Activated T-helper 1 cell treated with anti-CD3 and anti-CD28 coated beads, Interleukin-12 subunit alpha, Interleukin-12 subunit beta, Interleukin-2, Interleukin-4 antibody, amounts not matched to agents 30 ng/mL and 10 ng/mL and 1 ng/mL, durations not matched to agents 14 hours and 24 hours and 36 hours (primary cell): ENCODE measurements at regions of chr12 and their contacts with region 1.

Region 1: DNA sequence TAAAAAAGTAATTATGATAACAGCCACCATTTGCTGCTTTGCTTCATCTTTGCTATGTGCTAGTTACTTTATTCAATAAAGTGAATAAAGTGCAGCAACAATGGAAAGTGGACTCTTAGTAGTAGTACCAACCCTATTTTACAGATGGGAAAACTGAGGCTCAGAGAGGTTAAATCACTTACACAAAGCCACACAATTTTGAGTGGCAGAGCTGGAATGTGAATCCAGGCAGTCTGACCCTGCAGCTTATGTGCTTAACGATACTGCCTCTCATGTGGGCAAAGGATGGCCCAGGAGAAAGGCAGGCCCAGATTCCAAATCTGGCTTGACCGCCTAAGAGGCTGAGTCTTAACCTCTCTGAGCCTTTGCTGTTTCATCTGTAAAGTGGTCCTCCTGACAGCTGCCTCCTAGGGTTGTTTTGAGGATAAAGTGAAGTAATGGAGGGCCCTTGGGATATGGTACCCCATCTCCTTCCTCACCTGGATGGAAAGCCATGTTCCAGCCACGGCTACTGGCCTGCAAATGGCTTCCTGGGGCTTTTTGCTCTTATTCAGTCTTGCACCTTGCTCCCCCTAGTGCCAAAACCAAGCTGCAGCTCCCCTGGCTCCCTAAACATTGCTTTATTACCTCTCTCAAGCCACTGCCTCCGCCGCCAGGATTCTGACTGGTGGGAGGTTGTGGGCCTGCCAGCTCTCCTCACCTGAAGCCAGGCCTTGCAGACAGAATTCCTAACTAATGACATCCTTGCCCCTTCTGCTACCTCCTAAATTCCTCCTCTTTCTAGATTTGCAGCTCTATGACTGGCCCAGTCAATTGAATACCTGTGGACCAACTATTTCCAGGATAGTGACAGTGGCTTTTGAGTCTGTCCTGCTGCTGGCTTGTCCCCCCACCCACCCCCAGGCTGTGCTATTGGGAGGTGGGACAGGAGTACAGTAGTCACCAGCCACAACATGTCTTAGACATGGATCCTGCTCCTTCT is 283.3 kb upstream of the PWP1 start:
- DNase-seq: peak; percentile 52
- H3K4me3 Mint-ChIP-seq: no peak overlapping the region
- H3K27ac Mint-ChIP-seq: no peak overlapping the region
- H3K4me1 Mint-ChIP-seq: peaks cover 41% of the 10 kb centered on the region
- H3K27me3 Mint-ChIP-seq: no peaks in the 10 kb centered on the region

Region 2: DNA sequence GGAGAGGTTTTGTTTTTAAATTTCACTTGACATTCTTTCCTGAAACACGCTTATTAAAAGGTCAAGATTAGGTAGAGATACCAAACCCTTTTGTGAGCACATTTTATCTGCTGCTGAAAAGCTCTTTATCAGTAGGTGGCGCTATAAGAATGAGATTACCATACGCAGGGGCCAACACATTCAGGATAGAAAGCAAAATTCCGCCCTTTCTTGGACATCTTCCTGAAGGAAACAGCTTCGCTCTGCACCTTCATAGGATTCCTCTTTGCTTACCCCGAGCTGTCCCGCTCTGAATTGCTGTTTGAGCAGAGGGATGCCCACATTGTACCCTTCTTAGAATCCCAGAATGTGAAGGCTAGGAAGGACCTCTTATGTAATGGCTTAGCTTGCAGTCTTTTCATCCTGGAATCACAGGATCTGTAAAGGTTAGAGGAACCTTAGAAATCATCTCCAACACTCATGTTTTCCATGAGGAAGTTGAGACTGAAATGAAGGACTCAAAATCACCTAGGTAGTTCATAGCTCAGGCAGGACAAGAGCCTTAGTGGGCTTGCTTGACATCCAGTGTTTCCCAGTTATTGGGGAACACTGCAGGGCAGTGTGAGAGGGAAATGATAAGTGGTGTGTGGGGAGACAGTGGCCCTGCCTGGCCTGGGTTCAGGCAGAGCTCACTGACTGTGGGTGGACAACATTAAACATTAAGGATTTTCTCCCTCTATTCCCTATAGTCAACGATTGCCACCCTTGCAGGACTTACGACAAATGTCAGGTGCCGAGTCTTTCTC is 270.3 kb before region 1 on chr12:
- intact Hi-C with region 1: loop called (anchors 1 kb)
- DNase-seq: peak; percentile 6
- H3K4me3 Mint-ChIP-seq: no peak overlapping the region
- H3K27ac Mint-ChIP-seq: no peak overlapping the region
- H3K4me1 Mint-ChIP-seq: no peaks in the 10 kb centered on the region
- H3K27me3 Mint-ChIP-seq: no peaks in the 10 kb centered on the region

Region 3: DNA sequence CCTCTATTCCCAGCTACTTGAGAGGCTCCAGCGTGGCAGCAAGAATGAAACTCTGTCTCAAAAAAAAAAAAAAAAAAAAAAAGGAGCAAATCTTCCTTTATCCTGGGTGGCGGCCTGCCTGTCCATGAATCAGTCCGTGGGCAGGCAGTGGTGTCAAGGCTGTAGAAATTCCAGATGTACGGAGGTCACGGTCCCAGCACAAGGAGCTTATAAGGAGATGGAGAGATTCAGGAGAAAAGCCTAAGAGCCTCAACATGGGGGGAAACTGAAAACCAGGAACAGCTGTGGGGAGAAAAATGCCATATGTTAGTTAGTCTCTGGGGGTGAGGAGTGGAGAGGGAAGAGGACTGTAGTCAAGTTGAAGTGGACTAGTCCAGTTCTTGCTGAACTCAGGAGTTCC is 178.5 kb before region 1 on chr12:
- intact Hi-C with region 1: loop called (anchors 5 kb)
- DNase-seq: no peak
- H3K4me3 Mint-ChIP-seq: no peak overlapping the region
- H3K27ac Mint-ChIP-seq: no peak overlapping the region
- H3K4me1 Mint-ChIP-seq: no peaks in the 10 kb centered on the region
- H3K27me3 Mint-ChIP-seq: peaks cover 27% of the 10 kb centered on the region

Region 4: GRCh38 chr12:107304588-107305532 is 97.5 kb before region 1 on chr12:
- intact Hi-C with region 1: no loop called
- DNase-seq: no peak
- H3K4me3 Mint-ChIP-seq: no peak overlapping the region
- H3K27ac Mint-ChIP-seq: no peak overlapping the region
- H3K4me1 Mint-ChIP-seq: peaks cover 15% of the 10 kb centered on the region
- H3K27me3 Mint-ChIP-seq: peaks cover 9% of the 10 kb centered on the region

Region 5: DNA sequence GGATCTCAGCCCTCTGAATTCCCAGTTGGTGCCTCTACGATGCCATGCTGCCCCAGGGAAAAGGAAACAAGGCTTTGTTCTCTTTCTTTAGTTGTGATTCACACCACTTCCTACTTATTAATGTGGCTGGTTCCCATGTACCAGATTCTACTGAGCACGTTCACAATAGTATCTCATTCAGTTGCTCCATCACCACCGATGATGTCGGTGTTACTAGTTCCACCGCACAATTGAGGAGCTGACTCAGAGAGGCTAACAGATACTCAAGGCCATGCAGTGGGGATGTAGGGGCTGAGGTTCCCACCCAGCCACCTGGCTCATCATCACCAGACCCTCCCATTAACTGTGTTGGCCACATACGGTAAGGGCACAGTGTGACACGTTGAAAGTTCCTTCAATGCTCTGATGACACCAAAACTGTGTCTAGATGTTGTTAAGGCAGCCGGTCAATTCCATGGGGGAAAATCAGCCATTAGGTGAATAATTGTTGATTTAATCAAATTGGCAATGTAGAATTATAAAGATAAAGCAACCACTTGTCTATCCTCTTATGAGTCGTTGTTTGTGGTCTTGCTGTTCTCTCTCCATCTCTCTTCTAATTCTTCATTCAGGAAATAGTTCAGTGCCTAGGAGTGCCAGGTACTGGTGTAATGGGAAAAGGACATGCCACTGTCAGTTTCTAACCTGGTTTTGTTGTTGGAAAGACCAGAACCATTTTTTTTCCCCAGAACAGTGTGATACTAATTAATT is 64.8 kb before region 1 on chr12:
- intact Hi-C with region 1: no loop called
- DNase-seq: no peak
- H3K4me3 Mint-ChIP-seq: no peak overlapping the region
- H3K27ac Mint-ChIP-seq: peak overlapping the region; percentile 22
- H3K4me1 Mint-ChIP-seq: peaks cover 55% of the 10 kb centered on the region
- H3K27me3 Mint-ChIP-seq: no peaks in the 10 kb centered on the region

Region 6: DNA sequence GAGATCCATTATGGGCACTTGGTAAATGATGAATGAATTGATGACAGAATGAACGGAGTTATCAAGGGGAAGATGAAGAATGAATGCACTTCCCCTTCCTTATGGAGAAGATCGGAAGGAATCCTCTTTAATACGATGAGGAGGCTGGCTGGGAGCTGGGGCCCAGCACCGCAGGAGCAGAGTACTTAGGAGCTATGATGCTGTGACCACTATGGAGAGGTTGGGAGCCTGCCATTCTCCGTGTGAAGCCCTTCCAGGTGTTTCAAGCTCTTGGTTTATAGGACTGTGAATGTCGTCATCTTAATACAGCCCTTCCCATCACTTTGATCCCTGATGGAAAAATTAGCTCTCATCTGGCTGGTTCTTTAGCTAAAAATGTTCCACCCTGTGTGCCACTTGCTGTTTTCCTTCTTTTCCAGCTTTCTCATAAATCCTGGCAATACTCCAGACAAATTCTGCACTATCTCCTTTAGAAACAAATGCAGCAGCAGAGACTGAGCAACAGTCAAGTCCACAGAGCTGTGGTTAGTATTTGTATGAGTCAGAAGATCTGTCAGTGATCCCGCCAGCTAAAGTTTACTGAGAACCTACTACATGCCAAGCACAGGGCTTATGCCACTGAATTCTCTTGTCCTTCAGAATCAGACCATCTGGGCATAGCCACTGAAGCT is 45.9 kb before region 1 on chr12:
- intact Hi-C with region 1: loop called (anchors 1 kb)
- DNase-seq: no peak
- H3K4me3 Mint-ChIP-seq: peak overlapping the region; percentile 19
- H3K27ac Mint-ChIP-seq: no peak overlapping the region
- H3K4me1 Mint-ChIP-seq: peaks cover 74% of the 10 kb centered on the region
- H3K27me3 Mint-ChIP-seq: peaks cover 2% of the 10 kb centered on the region

Region 7: DNA sequence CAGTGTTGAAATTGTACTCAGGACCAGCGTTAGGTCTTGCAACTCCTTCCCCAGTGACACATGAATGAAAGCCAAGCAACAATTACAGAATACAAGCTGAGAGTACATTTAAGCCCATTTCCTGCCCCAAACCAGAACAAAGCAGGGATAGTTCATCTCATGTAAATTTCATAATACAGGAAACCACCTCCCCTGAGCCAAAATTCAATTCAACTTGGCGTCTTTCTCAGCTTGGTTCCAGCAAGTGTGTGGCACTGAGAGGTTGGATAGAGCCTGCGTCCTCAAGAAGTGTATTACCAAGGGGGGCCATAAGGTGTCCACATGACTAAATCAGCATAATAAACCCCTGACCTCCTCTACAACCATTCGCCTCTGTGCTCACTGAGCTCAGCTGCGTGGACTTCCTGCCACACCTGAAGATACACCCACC is 30.1 kb before region 1 on chr12:
- intact Hi-C with region 1: loop called (anchors 1 kb)
- DNase-seq: peak; percentile 42
- H3K4me3 Mint-ChIP-seq: peak overlapping the region; percentile 52
- H3K27ac Mint-ChIP-seq: peak overlapping the region; percentile 87
- H3K4me1 Mint-ChIP-seq: peaks cover 75% of the 10 kb centered on the region
- H3K27me3 Mint-ChIP-seq: no peaks in the 10 kb centered on the region

Region 8: DNA sequence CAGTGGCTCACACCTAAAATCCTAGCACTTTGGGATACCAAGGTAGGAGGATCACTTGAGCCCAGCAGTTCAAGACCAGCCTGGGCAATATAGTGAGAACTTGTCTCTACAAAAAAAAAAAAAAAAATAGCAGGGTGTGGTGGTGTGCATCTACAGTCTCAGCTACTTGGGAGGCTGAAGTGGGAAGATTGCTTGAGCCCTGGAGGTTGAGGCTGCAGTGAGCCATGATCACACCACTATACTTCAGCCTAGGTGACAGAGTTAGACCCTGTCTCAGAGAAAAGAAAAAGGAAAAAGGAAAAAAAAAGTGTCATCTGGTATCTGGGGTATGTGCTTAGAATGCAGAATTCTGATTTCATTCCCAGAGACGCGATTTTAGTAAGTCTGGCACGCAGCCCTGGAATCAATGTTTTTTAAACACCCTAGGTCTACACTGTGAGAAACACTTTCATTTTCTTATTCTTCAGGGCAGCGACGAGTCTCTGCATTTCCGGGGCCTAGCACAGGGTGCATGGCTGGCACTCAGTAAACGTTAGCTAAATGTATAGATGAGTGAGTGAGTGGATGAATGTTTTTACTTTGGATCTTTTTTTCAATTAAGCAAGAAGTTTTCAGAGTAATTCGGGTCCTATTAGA is 39.5 kb after region 1 on chr12:
- intact Hi-C with region 1: no loop called
- DNase-seq: no peak
- H3K4me3 Mint-ChIP-seq: peak overlapping the region; percentile 9
- H3K27ac Mint-ChIP-seq: no peak overlapping the region
- H3K4me1 Mint-ChIP-seq: peaks cover 14% of the 10 kb centered on the region
- H3K27me3 Mint-ChIP-seq: no peaks in the 10 kb centered on the region

Region 9: GRCh38 chr12:107607464-107608392 is 205.4 kb after region 1 on chr12:
- intact Hi-C with region 1: loop called (anchors 1 kb)
- DNase-seq: peak; percentile 55
- H3K4me3 Mint-ChIP-seq: no peak overlapping the region
- H3K27ac Mint-ChIP-seq: no peak overlapping the region
- H3K4me1 Mint-ChIP-seq: no peaks in the 10 kb centered on the region
- H3K27me3 Mint-ChIP-seq: no peaks in the 10 kb centered on the region